ENCODE measurements at regions of chr2 and their contacts with region 1.

Region 1: GRCh38 chr2:74529357-74530238 is at the starts of genes AUP1 and HTRA2:
- DNase-seq: peak; percentile 99
- H3K4me3 ChIP-seq: peak within 1 kb of the TSS; percentile 78
- H3K4me3 Mint-ChIP-seq: peak within 1 kb of the TSS; percentile 99
- H3K27ac Mint-ChIP-seq: peak within 1 kb of the TSS; percentile 99
- H3K4me1 ChIP-seq: peaks cover 6% of the 10 kb centered on the region
- H3K4me1 Mint-ChIP-seq: peaks cover 18% of the 10 kb centered on the region
- H3K27me3 ChIP-seq: no peaks in the 10 kb centered on the region
- H3K27me3 Mint-ChIP-seq: no peaks in the 10 kb centered on the region
- CTCF ChIP-seq: no peak
- total RNA-seq, gene AUP1: 154 and 156 TPM in 2 replicates
- total RNA-seq, gene HTRA2: 27.0 and 27.3 TPM in 2 replicates

Region 2: GRCh38 chr2:74267068-74267467 is 262.5 kb before region 1 on chr2:
- CTCF ChIA-PET with region 1: no interaction called
- POLR2A ChIA-PET with region 1: no interaction called
- intact Hi-C with region 1: no loop called
- DNase-seq: peak in 1 of 2 experiments; percentile 62
- H3K4me3 ChIP-seq: no peak overlapping the region
- H3K4me3 Mint-ChIP-seq: no peak overlapping the region
- H3K27ac Mint-ChIP-seq: no peak overlapping the region
- H3K4me1 ChIP-seq: no peaks in the 10 kb centered on the region
- H3K4me1 Mint-ChIP-seq: no peaks in the 10 kb centered on the region
- H3K27me3 ChIP-seq: no peaks in the 10 kb centered on the region
- H3K27me3 Mint-ChIP-seq: no peaks in the 10 kb centered on the region
- CTCF ChIP-seq: peak; percentile 47 to 75

Region 3: DNA sequence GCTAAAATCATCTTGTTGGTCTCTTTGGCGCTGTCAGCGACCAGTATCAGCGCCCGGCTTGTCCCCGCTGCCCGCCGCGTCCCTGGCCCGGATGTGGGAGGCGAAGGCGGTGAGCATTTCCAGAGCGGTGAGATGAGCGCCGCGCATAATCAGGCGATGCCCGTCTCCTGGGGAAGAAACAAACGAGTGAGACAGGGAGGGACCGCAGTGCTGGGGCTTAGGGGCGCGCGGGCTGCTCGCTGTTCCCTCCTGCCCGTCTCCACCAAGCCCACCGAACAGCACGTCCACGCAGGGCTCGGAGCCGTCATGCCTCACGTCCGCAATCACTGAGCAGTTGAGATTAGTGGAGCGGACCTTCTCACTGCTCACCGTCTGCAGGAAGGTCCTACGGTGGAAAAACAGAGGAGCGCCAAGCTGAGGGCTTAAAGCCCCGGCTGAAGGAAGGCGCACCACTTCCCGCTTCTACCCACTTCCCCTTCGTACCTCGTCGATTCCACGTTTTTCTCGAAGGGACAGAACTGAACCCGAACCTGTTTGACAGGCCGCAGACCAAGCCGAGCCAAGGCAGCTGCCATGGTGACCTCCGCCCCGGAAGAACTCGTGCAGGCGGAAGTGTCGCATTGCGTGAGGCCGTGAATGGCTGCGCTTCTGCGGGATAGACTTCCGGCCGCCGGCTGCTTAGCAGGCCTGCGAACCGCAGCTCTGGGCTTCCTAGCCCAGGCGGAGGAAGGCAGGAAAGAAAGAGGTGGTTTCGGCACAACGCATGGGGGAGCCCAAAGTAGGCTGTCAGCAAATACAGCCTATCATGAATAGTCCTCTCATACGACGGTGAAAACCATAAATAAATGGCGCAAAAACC is 57.3 kb before region 1 on chr2 and contains the start of gene MRPL53:
- CTCF ChIA-PET with region 1: interaction called, 6 read pairs
- POLR2A ChIA-PET with region 1: no interaction called
- intact Hi-C with region 1: loop called (anchors 1 kb)
- DNase-seq: peak; percentile 97
- H3K4me3 ChIP-seq: peak within 1 kb of the TSS; percentile 65
- H3K4me3 Mint-ChIP-seq: peak within 1 kb of the TSS; percentile 93
- H3K27ac Mint-ChIP-seq: peak within 1 kb of the TSS; percentile 95
- H3K4me1 ChIP-seq: peaks cover 4% of the 10 kb centered on the region; the same call in 1 of the 2 replicates
- H3K4me1 Mint-ChIP-seq: peaks cover 8% of the 10 kb centered on the region
- H3K27me3 ChIP-seq: no peaks in the 10 kb centered on the region
- H3K27me3 Mint-ChIP-seq: no peaks in the 10 kb centered on the region
- CTCF ChIP-seq: no peak
- total RNA-seq, gene MRPL53: 88.4 and 102 TPM in 2 replicates

Region 4: GRCh38 chr2:74482801-74483674 is 46.6 kb before region 1 on chr2 and contains the starts of genes CCDC142 and TTC31:
- CTCF ChIA-PET with region 1: interaction called, 8 read pairs
- POLR2A ChIA-PET with region 1: interaction called, 3 read pairs
- intact Hi-C with region 1: loop called (anchors 1 kb)
- DNase-seq: peak; percentile 95 to 96
- H3K4me3 ChIP-seq: peak within 1 kb of the TSS; percentile 76
- H3K4me3 Mint-ChIP-seq: peak within 1 kb of the TSS; percentile 82
- H3K27ac Mint-ChIP-seq: peak within 1 kb of the TSS; percentile 90
- H3K4me1 ChIP-seq: peaks cover 12% of the 10 kb centered on the region
- H3K4me1 Mint-ChIP-seq: peaks cover 25% of the 10 kb centered on the region
- H3K27me3 ChIP-seq: no peaks in the 10 kb centered on the region
- H3K27me3 Mint-ChIP-seq: no peaks in the 10 kb centered on the region
- CTCF ChIP-seq: peak; percentile 89 to 95
- total RNA-seq, gene CCDC142: 39.0 and 47.1 TPM in 2 replicates
- total RNA-seq, gene TTC31: 31.3 and 32.4 TPM in 2 replicates

Region 5: DNA sequence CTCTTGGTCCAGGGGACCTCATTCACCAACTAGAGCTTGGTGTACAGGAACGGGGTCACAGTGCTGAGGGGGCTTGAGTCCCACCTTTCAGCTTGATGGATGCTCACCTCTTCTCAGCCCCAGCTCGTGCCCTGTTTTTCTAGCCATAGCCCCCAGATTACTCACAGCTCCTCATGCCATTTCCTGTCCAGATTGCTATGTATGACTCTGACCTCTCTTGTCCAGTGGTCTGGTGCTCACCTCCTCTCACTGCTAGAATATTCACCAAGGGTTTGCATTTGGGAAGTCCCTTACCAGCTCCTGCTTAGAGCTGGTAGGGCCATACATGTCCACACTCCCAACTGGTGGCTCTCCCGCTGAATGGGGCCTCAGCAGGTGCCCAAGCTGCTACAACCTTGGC is 36.1 kb before region 1 on chr2:
- CTCF ChIA-PET with region 1: no interaction called
- POLR2A ChIA-PET with region 1: no interaction called
- intact Hi-C with region 1: no loop called
- DNase-seq: no peak
- H3K4me3 ChIP-seq: no peak overlapping the region
- H3K4me3 Mint-ChIP-seq: no peak overlapping the region
- H3K27ac Mint-ChIP-seq: no peak overlapping the region
- H3K4me1 ChIP-seq: peaks cover 41% of the 10 kb centered on the region
- H3K4me1 Mint-ChIP-seq: peaks cover 10% of the 10 kb centered on the region
- H3K27me3 ChIP-seq: no peaks in the 10 kb centered on the region
- H3K27me3 Mint-ChIP-seq: no peaks in the 10 kb centered on the region
- CTCF ChIP-seq: no peak

Region 6: GRCh38 chr2:74507145-74507925 is 22.3 kb before region 1 on chr2 and contains the start of gene PCGF1:
- CTCF ChIA-PET with region 1: interaction called, 7 read pairs
- POLR2A ChIA-PET with region 1: interaction called, 7 read pairs
- intact Hi-C with region 1: loop called (anchors 1 kb)
- DNase-seq: peak; percentile 98 to 99
- H3K4me3 ChIP-seq: peak within 1 kb of the TSS; percentile 68
- H3K4me3 Mint-ChIP-seq: peak within 1 kb of the TSS; percentile 91
- H3K27ac Mint-ChIP-seq: peak within 1 kb of the TSS; percentile 99
- H3K4me1 ChIP-seq: peaks cover 26% of the 10 kb centered on the region
- H3K4me1 Mint-ChIP-seq: peaks cover 28% of the 10 kb centered on the region
- H3K27me3 ChIP-seq: no peaks in the 10 kb centered on the region
- H3K27me3 Mint-ChIP-seq: no peaks in the 10 kb centered on the region
- CTCF ChIP-seq: peak; percentile 70 to 89
- total RNA-seq, gene PCGF1: 27.0 and 29.7 TPM in 2 replicates

Region 7: DNA sequence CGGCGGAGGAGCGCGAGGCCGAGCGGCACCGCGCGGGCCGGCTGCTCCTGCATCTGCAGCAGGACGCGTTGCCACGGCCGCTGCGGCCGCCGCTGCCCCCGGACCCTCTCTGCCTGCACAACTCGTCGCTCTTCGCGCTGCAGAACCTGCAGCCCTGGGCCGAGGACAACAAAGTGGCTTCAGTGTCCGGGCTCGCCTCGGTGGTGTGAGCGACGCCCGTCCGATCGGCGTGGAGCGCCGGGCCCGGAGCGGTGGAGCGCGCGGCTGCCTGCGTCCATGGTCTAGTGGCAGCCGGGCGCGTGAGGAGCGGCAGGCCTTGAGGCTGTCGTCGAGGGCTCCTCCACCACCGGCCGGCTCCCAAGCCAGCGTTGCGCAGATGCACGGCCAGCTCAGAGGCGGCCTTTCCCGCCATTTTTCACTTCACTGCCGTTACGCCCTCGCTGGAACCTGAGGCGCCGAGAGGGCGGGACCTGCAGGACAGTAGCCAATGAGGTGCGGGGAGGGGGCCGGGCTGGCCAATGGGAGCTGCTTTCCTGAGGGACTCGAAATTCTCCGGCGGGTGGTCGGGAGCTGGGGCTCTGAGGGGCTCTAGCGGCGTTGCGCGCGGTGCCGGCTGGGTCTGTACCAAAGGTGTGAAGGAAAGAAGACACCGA is 13.5 kb before region 1 on chr2:
- CTCF ChIA-PET with region 1: interaction called, 4 read pairs
- POLR2A ChIA-PET with region 1: interaction called, 5 read pairs
- intact Hi-C with region 1: loop called (anchors 1 kb)
- DNase-seq: peak; percentile 81 to 87
- H3K4me3 ChIP-seq: peak overlapping the region; percentile 60
- H3K4me3 Mint-ChIP-seq: peak overlapping the region; percentile 72
- H3K27ac Mint-ChIP-seq: peak overlapping the region; percentile 2
- H3K4me1 ChIP-seq: no peaks in the 10 kb centered on the region
- H3K4me1 Mint-ChIP-seq: no peaks in the 10 kb centered on the region
- H3K27me3 ChIP-seq: no peaks in the 10 kb centered on the region
- H3K27me3 Mint-ChIP-seq: peaks cover 8% of the 10 kb centered on the region
- CTCF ChIP-seq: no peak

Region 8: GRCh38 chr2:74548900-74549826 is 19.6 kb after region 1 on chr2:
- CTCF ChIA-PET with region 1: interaction called, 3 read pairs
- POLR2A ChIA-PET with region 1: no interaction called
- intact Hi-C with region 1: loop called (anchors 1 kb)
- DNase-seq: peak; percentile 88 to 90
- H3K4me3 ChIP-seq: peak overlapping the region; percentile 74
- H3K4me3 Mint-ChIP-seq: peak overlapping the region; percentile 87
- H3K27ac Mint-ChIP-seq: peak overlapping the region; percentile 94
- H3K4me1 ChIP-seq: peaks cover 22% of the 10 kb centered on the region
- H3K4me1 Mint-ChIP-seq: peaks cover 13% of the 10 kb centered on the region
- H3K27me3 ChIP-seq: no peaks in the 10 kb centered on the region
- H3K27me3 Mint-ChIP-seq: no peaks in the 10 kb centered on the region
- CTCF ChIP-seq: no peak

Region 9: GRCh38 chr2:74632209-74632938 is 102.8 kb after region 1 on chr2:
- CTCF ChIA-PET with region 1: no interaction called
- POLR2A ChIA-PET with region 1: no interaction called
- intact Hi-C with region 1: no loop called
- DNase-seq: no peak
- H3K4me3 ChIP-seq: no peak overlapping the region
- H3K4me3 Mint-ChIP-seq: no peak overlapping the region
- H3K27ac Mint-ChIP-seq: no peak overlapping the region
- H3K4me1 ChIP-seq: no peaks in the 10 kb centered on the region
- H3K4me1 Mint-ChIP-seq: no peaks in the 10 kb centered on the region
- H3K27me3 ChIP-seq: no peaks in the 10 kb centered on the region
- H3K27me3 Mint-ChIP-seq: peaks cover 17% of the 10 kb centered on the region
- CTCF ChIP-seq: no peak

Measured in Caco-2 (cell line).